ENCODE measurements at regions of chr7 and their contacts with region 1.

Region 1: DNA sequence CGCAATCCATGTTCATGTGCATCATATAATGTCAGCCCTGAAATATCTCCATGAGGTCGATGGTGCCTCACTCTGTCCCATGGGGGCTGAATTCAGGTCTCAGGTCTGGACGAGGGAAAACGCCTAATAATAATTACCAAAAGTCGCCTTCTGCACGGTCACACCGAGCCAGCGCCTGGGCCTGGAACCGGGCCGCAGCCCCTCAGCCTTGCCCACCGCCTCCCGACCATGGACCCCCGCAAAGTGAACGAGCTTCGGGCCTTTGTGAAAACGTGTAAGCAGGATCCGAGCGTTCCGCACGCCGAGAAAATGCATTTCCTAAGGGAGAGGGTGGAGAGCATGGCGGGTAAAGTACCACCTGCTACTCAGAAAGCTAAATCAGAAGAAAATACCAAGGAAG is 18.8 kb upstream of the KLRG2 start:
- DNase-seq: no peak
- ATAC-seq: no peak
- H3K4me3 ChIP-seq: no peak overlapping the region
- H3K27ac ChIP-seq: no peak overlapping the region
- H3K4me1 ChIP-seq: no peaks in the 10 kb centered on the region
- H3K27me3 ChIP-seq: no peaks in the 10 kb centered on the region
- CTCF ChIP-seq: no peak

Region 2: GRCh38 chr7:139566736-139567647 is 64.8 kb after region 1 on chr7:
- intact Hi-C with region 1: loop called in 1 of 2 experiments (anchors 5 kb)
- DNase-seq: no peak
- ATAC-seq: no peak
- H3K4me3 ChIP-seq: no peak overlapping the region
- H3K27ac ChIP-seq: no peak overlapping the region
- H3K4me1 ChIP-seq: peaks cover 11% of the 10 kb centered on the region
- H3K27me3 ChIP-seq: no peaks in the 10 kb centered on the region
- CTCF ChIP-seq: no peak

Region 3: GRCh38 chr7:139602143-139602722 is 100.0 kb after region 1 on chr7:
- intact Hi-C with region 1: no loop called
- DNase-seq: no peak
- ATAC-seq: peak in 3 of 4 donors; percentile 56 to 88 (median 76)
- H3K4me3 ChIP-seq: no peak overlapping the region
- H3K27ac ChIP-seq: no peak overlapping the region
- H3K4me1 ChIP-seq: no peaks in the 10 kb centered on the region
- H3K27me3 ChIP-seq: no peaks in the 10 kb centered on the region
- CTCF ChIP-seq: peak; percentile 38

Region 4: DNA sequence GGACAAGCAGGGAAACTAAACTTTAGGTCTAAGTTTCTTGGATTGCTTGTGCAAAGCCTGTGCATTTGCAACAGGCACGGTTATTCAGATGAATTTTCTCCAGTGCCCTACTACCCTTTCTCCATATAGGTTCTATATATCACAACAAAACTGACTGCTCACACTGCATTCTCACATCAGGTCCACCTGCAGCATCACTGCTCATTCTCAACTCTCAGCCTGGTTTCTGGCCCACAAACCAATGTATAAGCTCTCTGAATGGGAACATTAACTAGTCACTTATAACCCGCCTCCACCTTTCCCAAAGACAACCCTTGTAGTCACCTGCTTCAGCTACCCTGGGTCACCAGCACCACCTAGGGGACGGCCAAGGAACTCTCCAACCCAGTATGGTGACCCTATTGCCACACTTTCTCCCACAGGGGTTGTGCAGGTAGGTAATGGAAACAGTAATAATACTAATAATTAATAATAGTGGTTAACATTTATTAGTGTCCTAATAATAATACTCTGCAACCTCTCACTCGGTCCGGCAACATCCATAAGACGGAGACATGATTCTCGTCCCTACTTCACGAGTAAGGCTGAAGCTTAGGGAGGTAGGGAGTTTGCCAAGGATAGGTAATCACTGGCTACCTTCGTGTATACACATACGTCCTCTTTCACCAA is 118.6 kb after region 1 on chr7:
- intact Hi-C with region 1: loop called (anchors 2 to 5 kb)
- DNase-seq: peak; percentile 34 to 73
- ATAC-seq: peak; percentile 78 to 87 (median 82)
- H3K4me3 ChIP-seq: no peak overlapping the region
- H3K27ac ChIP-seq: no peak overlapping the region
- H3K4me1 ChIP-seq: no peaks in the 10 kb centered on the region
- H3K27me3 ChIP-seq: no peaks in the 10 kb centered on the region
- CTCF ChIP-seq: peak; percentile 70

Measured in psoas muscle (tissue), 8 donors.